ENCODE measurements at regions of chr17 and their contacts with region 1.

Region 1: GRCh38 chr17:33745047-33745760 is 452.1 kb upstream of the ASIC2 start:
- DNase-seq: no peak
- ATAC-seq: no peak
- H3K4me3 ChIP-seq: no peak overlapping the region
- H3K27ac ChIP-seq: no peak overlapping the region
- H3K4me1 ChIP-seq: no peaks in the 10 kb centered on the region
- H3K27me3 ChIP-seq: peaks cover 0 to 59% (median 24%) of the 10 kb centered on the region in 7 donors
- CTCF ChIP-seq: no peak

Region 2: GRCh38 chr17:32936894-32937500 is 808.2 kb before region 1 on chr17:
- intact Hi-C with region 1: loop called in 1 of 10 experiments (anchors 10 kb)
- DNase-seq: peak; percentile 41 to 50
- ATAC-seq: peak; percentile 38 to 85 (median 78)
- H3K4me3 ChIP-seq: no peak overlapping the region
- H3K27ac ChIP-seq: no peak overlapping the region
- H3K4me1 ChIP-seq: peaks cover 0 to 12% (median 4%) of the 10 kb centered on the region in 9 donors
- H3K27me3 ChIP-seq: peaks cover 0 to 6% (median 0%) of the 10 kb centered on the region in 7 donors
- CTCF ChIP-seq: peak; percentile 57 to 85 (median 78)

Region 3: GRCh38 chr17:32997753-32998632 is 747.2 kb before region 1 on chr17:
- intact Hi-C with region 1: loop called in 1 of 10 experiments (anchors 10 kb)
- DNase-seq: peak; percentile 68 to 73
- ATAC-seq: peak in 7 of 8 donors; percentile 38 to 74 (median 62)
- H3K4me3 ChIP-seq: no peak overlapping the region
- H3K27ac ChIP-seq: no peak overlapping the region
- H3K4me1 ChIP-seq: peaks cover 0 to 7% (median 0%) of the 10 kb centered on the region in 9 donors
- H3K27me3 ChIP-seq: peaks cover 0 to 37% (median 17%) of the 10 kb centered on the region in 7 donors
- CTCF ChIP-seq: peak; percentile 70 to 94 (median 89)

Region 4: GRCh38 chr17:33038740-33039139 is 706.5 kb before region 1 on chr17:
- intact Hi-C with region 1: loop called in 2 of 10 experiments (anchors 5 to 10 kb)
- DNase-seq: peak; percentile 36 to 48
- ATAC-seq: peak in 7 of 8 donors; percentile 53 to 85 (median 76)
- H3K4me3 ChIP-seq: no peak overlapping the region
- H3K27ac ChIP-seq: peak overlapping the region in 1 of 10 donors; percentile 24
- H3K4me1 ChIP-seq: peaks cover 3 to 26% (median 22%) of the 10 kb centered on the region in 9 donors
- H3K27me3 ChIP-seq: peaks cover 0 to 35% (median 10%) of the 10 kb centered on the region in 7 donors
- CTCF ChIP-seq: peak; percentile 43 to 79 (median 68)

Region 5: DNA sequence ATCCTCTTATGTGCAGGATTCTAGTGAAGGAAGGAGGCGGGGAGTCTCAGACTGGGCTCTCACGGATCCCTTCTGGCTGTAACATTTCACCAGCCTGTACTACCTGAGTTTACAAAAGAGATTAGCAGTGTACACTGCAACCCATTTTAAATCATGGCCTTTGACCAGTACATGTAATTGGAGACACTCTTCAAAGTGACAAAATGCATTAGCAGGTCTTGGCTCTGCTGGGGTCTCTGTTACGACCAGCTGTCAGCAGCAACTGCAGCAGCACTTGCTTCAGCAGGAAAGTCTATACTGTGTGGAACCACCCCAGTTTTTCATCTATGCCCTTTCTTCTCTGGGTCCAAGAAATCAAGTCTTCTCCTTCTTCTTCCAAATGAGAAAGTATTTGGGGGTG is 129.3 kb before region 1 on chr17:
- intact Hi-C with region 1: no loop called
- DNase-seq: no peak
- ATAC-seq: no peak
- H3K4me3 ChIP-seq: no peak overlapping the region
- H3K27ac ChIP-seq: no peak overlapping the region
- H3K4me1 ChIP-seq: no peaks in the 10 kb centered on the region
- H3K27me3 ChIP-seq: peaks cover 0 to 33% (median 7%) of the 10 kb centered on the region in 7 donors
- CTCF ChIP-seq: no peak

Region 6: GRCh38 chr17:33802349-33803198 is 57.4 kb after region 1 on chr17:
- intact Hi-C with region 1: no loop called
- DNase-seq: no peak
- ATAC-seq: peak in 2 of 8 donors; percentile 25 to 49
- H3K4me3 ChIP-seq: no peak overlapping the region
- H3K27ac ChIP-seq: peak overlapping the region in 1 of 10 donors; percentile 56
- H3K4me1 ChIP-seq: peaks cover 0 to 8% (median 0%) of the 10 kb centered on the region in 9 donors
- H3K27me3 ChIP-seq: peaks cover 0 to 35% (median 7%) of the 10 kb centered on the region in 7 donors
- CTCF ChIP-seq: no peak

Region 7: DNA sequence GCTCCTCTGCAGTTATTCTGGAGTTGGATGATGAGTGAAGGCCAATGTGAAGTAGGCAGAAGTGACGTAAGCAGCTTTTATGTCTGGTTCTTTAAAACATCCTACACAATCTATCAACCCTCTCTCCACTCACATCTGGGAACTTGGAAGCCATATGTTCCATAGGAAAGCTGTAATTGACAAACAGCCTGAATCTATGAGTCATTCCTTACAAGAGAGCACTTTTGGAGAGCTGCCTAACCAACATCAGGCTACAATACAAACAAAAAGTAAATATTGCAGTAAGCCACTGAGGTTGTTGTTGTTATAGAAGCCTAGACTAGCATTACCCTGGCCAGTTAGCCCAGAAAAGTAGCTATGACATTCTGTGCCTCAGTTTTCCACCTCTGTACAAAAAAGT is 530.7 kb after region 1 on chr17:
- intact Hi-C with region 1: no loop called
- DNase-seq: no peak
- ATAC-seq: no peak
- H3K4me3 ChIP-seq: no peak overlapping the region
- H3K27ac ChIP-seq: no peak overlapping the region
- H3K4me1 ChIP-seq: peaks cover 0 to 9% (median 0%) of the 10 kb centered on the region in 9 donors
- H3K27me3 ChIP-seq: peaks cover 0 to 8% (median 0%) of the 10 kb centered on the region in 7 donors
- CTCF ChIP-seq: no peak

Measured in heart right ventricle (tissue), 16 donors.